Heart right ventricle (tissue), 16 donors: ENCODE measurements at regions of chr15 and their contacts with region 1.

Region 1: DNA sequence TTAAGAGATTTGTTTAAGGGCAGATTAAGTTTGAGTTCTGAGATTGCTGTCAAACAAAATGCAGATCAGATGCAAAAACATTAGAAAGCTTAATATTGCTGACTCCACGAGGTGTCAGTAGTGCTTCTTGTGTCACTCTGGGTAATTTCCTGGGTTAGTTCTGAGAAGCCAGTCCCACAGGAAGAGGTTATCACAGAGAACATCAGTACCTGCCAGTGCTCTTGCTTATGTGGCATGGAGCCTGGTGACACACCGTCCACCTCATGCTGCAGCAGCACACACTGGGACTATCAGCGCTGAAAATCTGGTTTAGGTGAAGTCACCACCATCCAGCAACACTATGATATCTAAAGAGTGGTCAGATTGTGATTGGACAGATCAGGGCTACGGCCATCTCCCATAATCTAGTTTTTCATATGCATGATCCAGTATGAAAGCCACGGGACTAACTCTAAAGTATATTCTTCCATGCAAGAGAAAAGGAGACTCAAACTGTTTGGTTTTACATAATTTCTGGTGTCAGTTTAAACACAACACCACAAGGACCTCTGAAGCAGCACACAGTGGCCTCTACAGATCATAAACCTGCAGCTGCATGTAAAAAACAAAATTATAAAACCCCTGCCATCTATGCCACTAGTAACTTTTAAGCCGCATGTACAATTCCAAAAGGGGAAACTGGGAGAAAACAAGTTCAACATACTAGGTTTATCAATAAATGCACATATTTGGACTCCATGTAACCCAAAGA is 36.1 kb upstream of the MYO5C start:
- DNase-seq: no peak
- ATAC-seq: peak in 7 of 8 donors; percentile 56 to 78 (median 63)
- H3K4me3 ChIP-seq: no peak overlapping the region
- H3K27ac ChIP-seq: no peak overlapping the region
- H3K4me1 ChIP-seq: peaks cover 0 to 9% (median 0%) of the 10 kb centered on the region in 9 donors
- H3K27me3 ChIP-seq: no peaks in the 10 kb centered on the region
- CTCF ChIP-seq: peak in 8 of 9 donors; percentile 16 to 65 (median 49)

Region 2: GRCh38 chr15:52256366-52256765 is 75.3 kb before region 1 on chr15:
- intact Hi-C with region 1: loop called in 4 of 10 experiments (anchors 5 to 10 kb)
- DNase-seq: peak; percentile 37 to 72
- ATAC-seq: peak; percentile 32 to 79 (median 52)
- H3K4me3 ChIP-seq: peak overlapping the region in 3 of 10 donors; percentile 9 to 15 (median 9)
- H3K27ac ChIP-seq: no peak overlapping the region
- H3K4me1 ChIP-seq: peaks cover 0 to 51% (median 18%) of the 10 kb centered on the region in 9 donors
- H3K27me3 ChIP-seq: no peaks in the 10 kb centered on the region
- CTCF ChIP-seq: peak; percentile 73 to 82 (median 78)

Region 3: DNA sequence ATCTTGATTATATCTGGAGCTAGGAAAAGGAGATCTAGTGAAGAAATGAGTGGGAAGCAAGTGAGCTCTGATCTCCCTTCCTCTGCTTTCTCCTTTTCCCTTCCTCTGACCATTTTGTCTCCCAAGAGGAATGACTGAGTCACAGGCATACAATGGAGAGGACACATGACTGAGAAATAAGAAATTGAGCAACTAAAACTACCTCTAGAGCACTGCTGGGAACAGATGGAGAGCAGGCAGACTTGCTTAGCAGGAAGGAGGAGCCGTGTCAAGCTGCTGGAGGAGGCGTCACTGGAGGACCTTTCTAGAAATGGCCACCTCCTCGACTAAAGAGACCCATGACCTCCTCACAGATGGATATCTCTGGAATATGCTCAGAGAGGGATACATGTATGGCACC is 30.8 kb after region 1 on chr15:
- intact Hi-C with region 1: no loop called
- DNase-seq: no peak
- ATAC-seq: peak; percentile 49 to 94 (median 64)
- H3K4me3 ChIP-seq: no peak overlapping the region
- H3K27ac ChIP-seq: peak overlapping the region in 2 of 10 donors; percentile 22 to 28
- H3K4me1 ChIP-seq: peaks cover 0 to 23% (median 0%) of the 10 kb centered on the region in 9 donors
- H3K27me3 ChIP-seq: no peaks in the 10 kb centered on the region
- CTCF ChIP-seq: no peak

Region 4: GRCh38 chr15:52379395-52380106 is 47.9 kb after region 1 on chr15:
- intact Hi-C with region 1: loop called in 1 of 10 experiments (anchors 10 kb)
- DNase-seq: no peak
- ATAC-seq: no peak
- H3K4me3 ChIP-seq: no peak overlapping the region
- H3K27ac ChIP-seq: no peak overlapping the region
- H3K4me1 ChIP-seq: peaks cover 0 to 8% (median 0%) of the 10 kb centered on the region in 9 donors
- H3K27me3 ChIP-seq: no peaks in the 10 kb centered on the region
- CTCF ChIP-seq: no peak

Region 5: GRCh38 chr15:52397118-52397517 is 65.5 kb after region 1 on chr15:
- intact Hi-C with region 1: no loop called
- DNase-seq: peak; percentile 14 to 42
- ATAC-seq: peak in 7 of 8 donors; percentile 46 to 93 (median 83)
- H3K4me3 ChIP-seq: no peak overlapping the region
- H3K27ac ChIP-seq: peak overlapping the region in 2 of 10 donors; percentile 1 to 4
- H3K4me1 ChIP-seq: peaks cover 0 to 12% (median 0%) of the 10 kb centered on the region in 9 donors
- H3K27me3 ChIP-seq: no peaks in the 10 kb centered on the region
- CTCF ChIP-seq: no peak

Region 6: DNA sequence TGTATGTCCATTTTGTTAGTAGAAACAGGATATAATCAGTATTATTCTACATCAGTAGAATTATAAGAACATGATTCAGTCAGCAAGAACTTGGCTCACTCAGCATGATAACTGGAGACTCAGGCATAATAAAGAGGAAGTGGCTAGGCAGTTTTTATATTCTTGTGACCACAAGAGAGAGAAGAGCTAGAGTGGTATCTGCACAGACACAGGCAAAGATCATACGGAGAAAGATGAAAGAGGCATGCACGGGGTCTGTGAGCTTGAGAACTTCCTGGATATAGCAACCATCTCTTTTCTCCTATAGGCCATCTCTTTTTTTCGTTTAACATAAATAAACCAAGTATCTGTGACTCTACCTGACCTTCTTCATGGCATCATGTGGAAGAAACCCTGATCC is 150.2 kb after region 1 on chr15:
- intact Hi-C with region 1: no loop called
- DNase-seq: no peak
- ATAC-seq: peak; percentile 46 to 91 (median 82)
- H3K4me3 ChIP-seq: no peak overlapping the region
- H3K27ac ChIP-seq: peak overlapping the region in 5 of 10 donors; percentile 7 to 83 (median 32)
- H3K4me1 ChIP-seq: peaks cover 0 to 77% (median 19%) of the 10 kb centered on the region in 9 donors
- H3K27me3 ChIP-seq: no peaks in the 10 kb centered on the region
- CTCF ChIP-seq: no peak

Region 7: GRCh38 chr15:52528991-52529926 is 197.6 kb after region 1 on chr15:
- intact Hi-C with region 1: loop called in 2 of 10 experiments (anchors 5 to 10 kb)
- DNase-seq: peak; percentile 60 to 74
- ATAC-seq: peak; percentile 78 to 89 (median 86)
- H3K4me3 ChIP-seq: peak overlapping the region; percentile 33 to 92 (median 84)
- H3K27ac ChIP-seq: peak overlapping the region; percentile 44 to 93 (median 82)
- H3K4me1 ChIP-seq: peaks cover 3 to 30% (median 16%) of the 10 kb centered on the region in 9 donors
- H3K27me3 ChIP-seq: peaks cover 0 to 32% (median 5%) of the 10 kb centered on the region in 7 donors
- CTCF ChIP-seq: peak in 2 of 9 donors; percentile 8 to 25

Region 8: DNA sequence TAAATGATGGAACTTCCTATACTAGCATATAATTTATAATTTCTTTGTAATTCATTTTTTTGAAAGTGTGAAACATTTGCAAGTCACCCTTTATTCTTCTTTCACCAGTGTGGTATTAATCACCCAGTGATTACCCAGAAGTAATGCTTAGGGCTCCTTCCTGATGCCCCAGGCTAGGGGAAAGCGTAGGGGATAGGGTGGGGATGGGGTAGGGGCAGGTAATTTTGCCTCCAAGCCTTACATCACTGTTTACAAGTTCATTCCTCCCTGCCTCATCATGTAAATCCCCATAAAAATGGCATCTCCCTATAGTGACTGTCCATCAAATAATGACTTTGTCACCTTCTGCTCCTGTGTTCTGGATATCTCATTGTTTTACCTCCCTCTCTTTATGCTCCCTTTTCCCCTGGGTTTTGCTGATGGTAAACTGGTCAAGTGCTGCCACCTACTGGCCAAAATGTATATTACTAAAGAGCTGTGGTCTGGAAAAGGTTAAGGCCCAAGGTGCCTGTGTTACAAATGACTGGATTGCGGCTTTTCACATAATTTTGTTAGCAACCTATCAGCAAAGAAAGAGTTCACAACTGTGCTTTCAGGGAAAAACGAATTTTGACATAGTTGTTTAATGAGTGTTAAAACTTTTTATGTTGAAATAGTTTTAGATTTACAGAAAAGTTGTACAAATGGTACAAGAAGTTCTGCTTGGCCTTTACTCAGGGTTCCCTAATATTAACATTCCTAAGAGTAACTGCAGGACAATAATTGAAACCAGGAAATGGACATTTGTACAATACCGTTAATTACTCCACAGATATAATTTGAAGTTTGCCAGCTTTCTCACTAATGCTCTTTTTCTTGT is 403.8 kb after region 1 on chr15:
- intact Hi-C with region 1: loop called in 6 of 10 experiments (anchors 5 to 10 kb)
- DNase-seq: peak in 1 of 2 donors; percentile 74
- ATAC-seq: peak; percentile 72 to 88 (median 82)
- H3K4me3 ChIP-seq: no peak overlapping the region
- H3K27ac ChIP-seq: no peak overlapping the region
- H3K4me1 ChIP-seq: peaks cover 0 to 33% (median 13%) of the 10 kb centered on the region in 9 donors
- H3K27me3 ChIP-seq: no peaks in the 10 kb centered on the region
- CTCF ChIP-seq: peak; percentile 77 to 92 (median 85)